Activated T-helper 2 cell treated with anti-CD3 and anti-CD28 coated beads, Interferon-gamma antibody, Interleukin-2, Interleukin-4, amounts not matched to agents 10 μg/mL and 5 μg/mL and 100 μg/mL, durations not matched to agents 14 hours and 24 hours and 36 hours (primary cell): ENCODE measurements at regions of chr15 and their contacts with region 1.

Region 1: GRCh38 chr15:96146726-96147125 is 183.8 kb upstream of the NR2F2 start:
- DNase-seq: no peak
- H3K4me3 Mint-ChIP-seq: no peak overlapping the region
- H3K27ac Mint-ChIP-seq: no peak overlapping the region
- H3K4me1 Mint-ChIP-seq: no peaks in the 10 kb centered on the region
- H3K27me3 Mint-ChIP-seq: no peaks in the 10 kb centered on the region

Region 2: GRCh38 chr15:96123630-96124187 is 23.0 kb before region 1 on chr15:
- intact Hi-C with region 1: loop called (anchors 1 kb)
- DNase-seq: no peak
- H3K4me3 Mint-ChIP-seq: no peak overlapping the region
- H3K27ac Mint-ChIP-seq: no peak overlapping the region
- H3K4me1 Mint-ChIP-seq: no peaks in the 10 kb centered on the region
- H3K27me3 Mint-ChIP-seq: no peaks in the 10 kb centered on the region